ENCODE measurements at regions of chr18 and their contacts with region 1.

Region 1: GRCh38 chr18:54149078-54149697 is 75.3 kb downstream of the MBD2 start:
- DNase-seq: peak; percentile 31
- H3K4me3 Mint-ChIP-seq: peak overlapping the region; percentile 73
- H3K27ac Mint-ChIP-seq: peak overlapping the region; percentile 96
- H3K4me1 Mint-ChIP-seq: peaks cover 65% of the 10 kb centered on the region
- H3K27me3 Mint-ChIP-seq: no peaks in the 10 kb centered on the region

Region 2: DNA sequence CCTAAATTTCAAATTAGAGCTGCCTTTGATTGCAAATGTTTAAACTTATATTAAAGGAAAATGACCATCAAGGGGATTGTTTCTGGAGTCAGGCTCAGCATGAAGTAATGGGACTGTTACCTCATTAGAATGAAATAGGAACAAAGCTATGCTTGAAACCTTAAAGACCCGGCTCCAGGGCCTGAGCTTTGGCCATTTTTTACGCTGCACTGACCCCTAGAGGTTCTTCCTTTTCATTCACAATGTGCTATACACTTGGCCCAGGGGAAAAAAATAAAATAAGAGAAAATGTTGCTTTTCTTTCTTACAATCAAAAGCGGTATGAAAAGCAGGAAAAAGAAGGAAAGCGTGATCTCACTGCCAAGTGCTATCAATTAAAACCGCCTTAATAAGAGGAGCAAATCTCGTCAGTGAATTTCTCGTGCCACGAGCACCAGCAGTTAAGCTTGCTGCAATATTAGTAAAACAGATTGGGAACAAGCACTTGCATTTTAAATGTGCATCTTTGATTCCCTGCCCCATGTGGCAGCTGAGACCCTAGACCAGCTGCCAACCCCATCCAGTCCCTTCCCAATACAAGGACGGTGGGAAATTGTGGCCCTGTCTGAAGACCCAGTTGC is 21.3 kb before region 1 on chr18:
- intact Hi-C with region 1: loop called (anchors 1 kb)
- DNase-seq: no peak
- H3K4me3 Mint-ChIP-seq: no peak overlapping the region
- H3K27ac Mint-ChIP-seq: no peak overlapping the region
- H3K4me1 Mint-ChIP-seq: peaks cover 45% of the 10 kb centered on the region
- H3K27me3 Mint-ChIP-seq: no peaks in the 10 kb centered on the region

Region 3: DNA sequence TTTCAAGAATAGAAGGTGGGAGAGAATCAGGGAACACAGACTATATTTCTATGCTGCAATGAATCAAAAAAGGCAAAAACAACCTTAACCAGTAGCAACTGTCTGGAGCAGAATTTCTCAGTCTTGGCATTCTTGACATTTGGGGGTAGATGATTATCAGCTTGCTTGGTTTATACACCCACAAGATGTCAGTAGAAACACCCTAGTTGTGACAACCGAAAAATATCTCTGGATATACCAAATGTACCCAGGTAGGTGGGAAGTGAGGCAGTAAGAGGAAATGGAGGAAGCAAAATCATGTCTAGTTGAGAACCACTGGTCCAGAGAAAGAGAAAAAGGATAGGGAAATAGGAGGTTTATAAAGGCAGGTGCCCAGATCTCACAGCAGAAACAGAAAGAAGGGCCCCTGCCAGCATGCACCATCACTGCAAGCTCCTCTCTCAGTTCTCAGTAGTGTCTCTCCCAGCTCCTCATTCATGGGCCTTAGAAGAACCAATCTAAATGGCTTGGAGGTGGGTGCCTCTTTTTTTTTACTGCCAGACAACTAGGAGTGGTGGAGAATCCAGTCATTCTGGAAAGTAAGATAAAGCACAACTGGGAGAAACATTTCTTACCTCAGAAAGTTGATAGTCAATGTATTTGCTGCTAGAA is 24.9 kb after region 1 on chr18:
- intact Hi-C with region 1: loop called (anchors 1 kb)
- DNase-seq: no peak
- H3K4me3 Mint-ChIP-seq: peak overlapping the region; percentile 49
- H3K27ac Mint-ChIP-seq: peak overlapping the region; percentile 96
- H3K4me1 Mint-ChIP-seq: peaks cover 69% of the 10 kb centered on the region
- H3K27me3 Mint-ChIP-seq: no peaks in the 10 kb centered on the region

Region 4: GRCh38 chr18:54209471-54210180 is 60.4 kb after region 1 on chr18:
- intact Hi-C with region 1: loop called (anchors 1 kb)
- DNase-seq: no peak
- H3K4me3 Mint-ChIP-seq: peak overlapping the region; percentile 5
- H3K27ac Mint-ChIP-seq: peak overlapping the region; percentile 85
- H3K4me1 Mint-ChIP-seq: peaks cover 70% of the 10 kb centered on the region
- H3K27me3 Mint-ChIP-seq: no peaks in the 10 kb centered on the region

Region 5: DNA sequence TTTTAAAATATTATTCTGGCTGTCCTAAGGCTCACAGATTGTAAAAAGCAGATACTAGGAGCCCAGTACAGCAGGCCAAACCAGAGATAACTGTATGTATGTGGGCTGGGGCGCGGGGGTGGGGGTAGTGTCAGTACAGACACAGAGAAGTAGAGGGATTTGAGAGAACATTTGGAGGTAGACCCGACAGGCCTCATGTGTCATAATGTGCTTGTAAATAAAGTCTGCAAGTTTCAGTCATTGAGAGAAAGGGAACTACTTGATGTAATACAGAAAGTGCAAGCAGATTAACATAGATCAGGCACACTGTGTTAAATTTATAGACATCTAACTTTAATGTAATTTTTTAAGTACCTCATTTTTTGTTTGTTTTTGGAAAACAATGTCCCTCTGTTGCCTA is 112.7 kb after region 1 on chr18:
- intact Hi-C with region 1: loop called (anchors 1 kb)
- DNase-seq: no peak
- H3K4me3 Mint-ChIP-seq: peak overlapping the region; percentile 77
- H3K27ac Mint-ChIP-seq: peak overlapping the region; percentile 94
- H3K4me1 Mint-ChIP-seq: peaks cover 66% of the 10 kb centered on the region
- H3K27me3 Mint-ChIP-seq: no peaks in the 10 kb centered on the region

Region 6: DNA sequence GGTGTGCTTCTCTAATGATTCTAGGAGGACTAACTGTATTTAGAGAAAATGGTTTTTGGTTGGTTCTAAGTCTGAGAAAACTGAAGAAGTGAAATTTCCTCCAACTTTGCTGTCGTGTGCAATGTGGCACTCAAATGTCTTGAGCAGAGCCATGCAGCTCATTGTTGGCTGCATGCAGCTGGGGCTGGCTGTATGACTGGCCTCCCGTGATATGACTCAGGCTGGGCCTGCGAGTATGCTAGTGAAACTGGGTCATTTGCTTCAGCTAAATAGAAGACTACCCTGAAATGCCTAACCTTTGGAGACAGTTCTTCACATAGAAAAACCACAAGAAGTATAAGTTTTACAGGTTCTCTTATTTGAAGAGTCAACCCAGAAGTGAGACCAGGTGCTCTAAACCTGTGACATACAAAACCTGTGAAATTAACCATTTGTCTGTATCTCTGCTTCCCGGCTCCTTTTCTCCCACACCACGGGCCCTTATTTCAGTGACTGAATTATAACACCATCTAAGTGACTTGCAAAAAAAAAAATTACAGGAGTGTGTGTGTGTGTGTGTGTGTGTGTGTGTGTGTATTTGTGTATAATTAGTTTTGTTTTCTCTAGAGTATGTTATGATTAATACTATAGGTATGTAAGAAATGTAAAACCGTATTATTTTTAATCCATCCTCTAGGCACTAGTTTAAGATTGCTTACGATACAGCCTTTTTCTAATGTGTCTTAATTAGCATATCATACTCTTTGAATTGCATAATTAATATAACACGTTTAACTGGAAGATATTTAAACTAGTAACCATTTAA is 136.0 kb after region 1 on chr18:
- intact Hi-C with region 1: loop called (anchors 1 kb)
- DNase-seq: peak; percentile 59
- H3K4me3 Mint-ChIP-seq: peak overlapping the region; percentile 32
- H3K27ac Mint-ChIP-seq: peak overlapping the region; percentile 73
- H3K4me1 Mint-ChIP-seq: peaks cover 39% of the 10 kb centered on the region
- H3K27me3 Mint-ChIP-seq: no peaks in the 10 kb centered on the region

Region 7: GRCh38 chr18:54296062-54296461 is 146.9 kb after region 1 on chr18:
- intact Hi-C with region 1: no loop called
- DNase-seq: no peak
- H3K4me3 Mint-ChIP-seq: no peak overlapping the region
- H3K27ac Mint-ChIP-seq: no peak overlapping the region
- H3K4me1 Mint-ChIP-seq: no peaks in the 10 kb centered on the region
- H3K27me3 Mint-ChIP-seq: no peaks in the 10 kb centered on the region

Region 8: GRCh38 chr18:54717673-54718407 is 568.7 kb after region 1 on chr18:
- intact Hi-C with region 1: loop called (anchors 10 kb)
- DNase-seq: peak; percentile 52
- H3K4me3 Mint-ChIP-seq: peak overlapping the region; percentile 55
- H3K27ac Mint-ChIP-seq: peak overlapping the region; percentile 49
- H3K4me1 Mint-ChIP-seq: peaks cover 55% of the 10 kb centered on the region
- H3K27me3 Mint-ChIP-seq: peaks cover 20% of the 10 kb centered on the region

Region 9: DNA sequence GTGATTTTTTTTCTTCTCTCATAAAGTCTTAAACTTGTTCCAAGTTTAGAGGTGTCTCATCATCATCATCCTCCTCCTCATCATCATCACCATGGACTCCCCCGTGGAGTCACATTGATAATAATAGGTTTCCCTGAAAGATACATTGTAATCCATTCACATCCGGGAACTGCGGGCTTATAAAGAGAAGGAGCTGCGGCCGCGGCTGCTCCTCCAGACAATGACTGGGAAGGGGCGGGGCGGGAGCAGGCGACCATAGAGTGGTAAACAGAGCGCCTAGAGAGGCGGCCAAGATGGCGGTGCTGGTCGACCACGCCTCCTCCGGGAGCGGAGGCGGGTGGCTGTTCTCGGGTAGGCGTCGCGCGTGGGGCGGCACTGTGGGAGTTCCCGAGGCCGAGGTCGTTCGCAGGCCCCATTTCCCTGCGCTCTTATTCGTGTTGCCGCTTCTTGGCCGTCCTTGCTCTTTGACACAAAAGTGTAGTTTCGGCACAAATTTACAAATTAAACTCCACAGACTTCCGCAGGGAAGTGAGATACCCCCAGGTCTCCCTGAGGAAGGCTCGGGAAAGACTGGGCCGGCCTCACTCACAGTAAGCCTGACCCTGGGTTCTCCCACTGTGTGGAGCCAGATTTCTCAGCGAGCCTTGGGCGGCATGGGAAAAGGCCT is 1440.6 kb after region 1 on chr18:
- intact Hi-C with region 1: no loop called
- DNase-seq: peak; percentile 81
- H3K4me3 Mint-ChIP-seq: peak overlapping the region; percentile 83
- H3K27ac Mint-ChIP-seq: peak overlapping the region; percentile 76
- H3K4me1 Mint-ChIP-seq: peaks cover 35% of the 10 kb centered on the region
- H3K27me3 Mint-ChIP-seq: peaks cover 31% of the 10 kb centered on the region